ENCODE measurements at regions of chr7 and their contacts with region 1.

Region 1: DNA sequence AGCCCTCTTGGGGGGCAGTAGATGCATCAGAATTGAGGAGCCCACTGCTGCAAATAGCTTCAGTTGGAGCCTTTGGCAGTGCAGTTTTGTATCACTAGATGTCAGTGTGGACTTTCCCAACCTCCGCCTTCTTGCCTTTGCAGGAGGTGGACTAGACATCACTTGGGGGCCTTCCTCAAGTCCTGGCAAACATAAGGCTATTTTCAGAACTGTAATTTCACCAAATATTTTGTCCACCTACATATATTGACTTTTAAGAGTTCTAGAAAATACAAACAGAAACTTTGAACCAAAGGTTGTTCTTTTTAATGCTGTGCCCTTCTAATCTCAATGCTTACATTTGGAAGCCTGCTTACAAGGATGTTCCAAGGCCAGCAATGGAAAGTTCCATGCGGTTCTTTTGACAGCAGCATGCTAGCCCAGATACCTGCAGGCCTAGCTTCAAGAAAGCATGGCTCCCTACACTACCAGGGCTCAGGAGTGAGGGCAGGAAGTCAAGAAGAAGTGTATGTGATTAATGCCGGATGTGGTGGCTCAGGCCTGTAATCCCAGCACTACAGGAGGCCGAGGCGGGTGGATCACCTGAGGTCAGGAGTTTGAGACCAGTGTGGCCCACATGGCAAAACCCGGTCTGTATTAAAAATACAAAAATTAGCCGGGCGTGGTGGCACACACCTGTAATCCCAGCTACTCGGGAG is 8.0 kb upstream of the ZNRF2 start:
- DNase-seq: no peak
- ATAC-seq: peak; percentile 78
- H3K4me3 Mint-ChIP-seq: no peak overlapping the region
- H3K27ac Mint-ChIP-seq: no peak overlapping the region
- H3K4me1 Mint-ChIP-seq: peaks cover 16% of the 10 kb centered on the region
- H3K27me3 Mint-ChIP-seq: no peaks in the 10 kb centered on the region
- CTCF ChIP-seq: no peak

Region 2: GRCh38 chr7:29878081-29878688 is 398.2 kb before region 1 on chr7:
- CTCF ChIA-PET with region 1: no interaction called
- POLR2A ChIA-PET with region 1: no interaction called
- intact Hi-C with region 1: loop called (anchors 10 kb)
- DNase-seq: no peak
- ATAC-seq: peak; percentile 31
- H3K4me3 Mint-ChIP-seq: no peak overlapping the region
- H3K27ac Mint-ChIP-seq: no peak overlapping the region
- H3K4me1 Mint-ChIP-seq: peaks cover 3% of the 10 kb centered on the region
- H3K27me3 Mint-ChIP-seq: peaks cover 12% of the 10 kb centered on the region
- CTCF ChIP-seq: peak; percentile 37

Region 3: GRCh38 chr7:30238721-30239441 is 37.5 kb before region 1 on chr7:
- CTCF ChIA-PET with region 1: interaction called, 10 read pairs
- POLR2A ChIA-PET with region 1: no interaction called
- intact Hi-C with region 1: no loop called
- DNase-seq: no peak
- ATAC-seq: peak; percentile 69
- H3K4me3 Mint-ChIP-seq: peak overlapping the region; percentile 58
- H3K27ac Mint-ChIP-seq: peak overlapping the region; percentile 88
- H3K4me1 Mint-ChIP-seq: peaks cover 48% of the 10 kb centered on the region
- H3K27me3 Mint-ChIP-seq: no peaks in the 10 kb centered on the region
- CTCF ChIP-seq: no peak

Region 4: DNA sequence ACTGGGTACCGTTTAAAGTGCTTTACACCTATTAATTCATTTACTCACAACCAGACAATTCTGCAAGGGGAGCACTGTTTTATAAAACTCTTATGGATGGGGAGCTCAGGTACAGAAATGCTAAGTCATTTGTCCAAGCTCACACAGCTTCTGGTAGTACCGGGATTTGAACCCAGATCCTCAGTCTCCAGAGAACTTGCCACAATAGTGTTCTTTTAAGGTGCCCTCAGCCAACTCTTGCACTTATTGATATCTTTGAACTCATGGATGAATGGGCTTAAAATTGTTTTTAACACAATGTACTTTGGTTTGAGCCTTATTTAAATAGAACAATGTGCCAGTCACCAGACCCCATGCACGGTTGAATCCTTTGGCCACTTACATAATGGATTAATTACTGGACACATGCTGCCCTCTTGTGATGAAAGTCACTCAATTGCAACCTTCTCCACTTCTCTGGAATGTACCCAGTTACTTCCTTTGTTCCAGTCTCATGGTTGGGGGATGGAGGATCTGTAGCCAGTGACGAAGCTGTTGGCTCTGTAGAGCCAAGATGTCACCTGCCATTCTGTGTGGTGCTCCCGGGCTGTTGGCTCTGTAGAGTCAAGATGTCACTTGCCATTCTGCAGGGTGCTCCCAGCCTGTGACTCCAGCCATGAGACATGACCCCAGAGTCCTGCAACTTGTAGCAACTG is 136.6 kb after region 1 on chr7:
- CTCF ChIA-PET with region 1: interaction called, 14 read pairs
- POLR2A ChIA-PET with region 1: no interaction called
- intact Hi-C with region 1: loop called (anchors 1 kb)
- DNase-seq: no peak
- ATAC-seq: peak; percentile 57
- H3K4me3 Mint-ChIP-seq: no peak overlapping the region
- H3K27ac Mint-ChIP-seq: no peak overlapping the region
- H3K4me1 Mint-ChIP-seq: peaks cover 33% of the 10 kb centered on the region
- H3K27me3 Mint-ChIP-seq: no peaks in the 10 kb centered on the region
- CTCF ChIP-seq: no peak

Region 5: DNA sequence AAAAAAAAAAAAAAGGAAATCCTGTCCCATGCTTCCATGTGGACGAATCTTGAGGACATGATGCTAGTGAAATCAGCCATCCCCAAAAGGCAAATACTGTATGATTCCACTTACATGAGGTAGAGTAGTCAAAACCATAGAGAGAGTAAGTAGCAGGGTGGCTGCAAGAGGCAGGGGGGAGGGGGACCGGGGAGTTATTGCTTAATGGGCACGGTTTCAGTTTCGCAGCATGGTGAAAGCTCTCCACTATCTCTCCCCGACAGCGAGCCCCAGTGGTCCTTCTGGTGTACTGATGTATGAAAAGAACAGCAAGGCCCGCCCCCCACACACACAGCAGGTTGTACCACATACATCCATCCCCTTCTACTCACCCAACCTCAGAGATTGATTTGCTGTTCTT is 169.4 kb after region 1 on chr7:
- CTCF ChIA-PET with region 1: interaction called, 6 read pairs
- POLR2A ChIA-PET with region 1: no interaction called
- intact Hi-C with region 1: loop called (anchors 5 kb)
- DNase-seq: peak; percentile 66
- ATAC-seq: peak; percentile 100
- H3K4me3 Mint-ChIP-seq: no peak overlapping the region
- H3K27ac Mint-ChIP-seq: peak overlapping the region; percentile 64
- H3K4me1 Mint-ChIP-seq: peaks cover 6% of the 10 kb centered on the region
- H3K27me3 Mint-ChIP-seq: no peaks in the 10 kb centered on the region
- CTCF ChIP-seq: no peak

Region 6: DNA sequence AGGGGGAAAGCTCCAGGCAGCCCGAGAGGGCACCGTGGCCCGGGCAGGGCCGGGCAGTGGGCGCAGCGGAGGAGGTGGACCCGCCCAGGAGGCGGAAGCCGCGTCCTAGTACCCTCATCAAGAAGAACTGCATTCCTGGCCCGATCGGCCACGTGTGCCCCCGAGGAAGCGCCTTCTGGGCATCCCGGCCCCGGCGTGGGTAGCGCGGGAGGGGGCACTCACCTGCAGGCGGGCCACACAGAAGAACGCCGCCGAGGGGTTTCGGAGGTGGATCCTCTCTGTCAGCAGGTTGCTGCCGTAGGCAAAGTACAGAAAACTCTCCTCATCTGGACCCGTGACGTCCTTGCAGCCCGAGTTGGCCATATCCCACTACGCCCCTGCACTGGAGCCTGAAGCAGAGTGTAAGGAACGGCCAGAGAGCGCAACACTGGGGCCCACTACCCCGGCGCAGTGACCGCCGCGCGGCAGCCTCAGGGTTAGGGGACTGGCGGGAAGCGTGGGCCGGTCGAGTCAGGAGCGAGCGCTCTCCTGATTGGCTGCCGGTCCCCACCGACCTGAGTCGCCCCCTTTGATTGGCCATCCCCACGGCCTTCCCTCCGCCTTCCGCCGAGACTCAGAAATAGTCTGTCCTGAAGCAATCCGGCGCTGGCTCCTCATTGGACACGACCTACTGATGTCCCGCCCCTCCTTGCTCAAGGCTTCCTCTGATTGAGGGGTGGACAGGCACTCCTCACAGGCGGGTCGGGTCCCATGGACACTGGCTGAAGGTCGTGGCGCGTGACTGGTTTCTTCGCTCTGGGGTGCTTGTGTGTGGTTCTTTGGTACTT is 228.2 kb after region 1 on chr7 and contains the start of gene GGCT:
- CTCF ChIA-PET with region 1: interaction called, 7 read pairs
- POLR2A ChIA-PET with region 1: interaction called, 3 read pairs
- intact Hi-C with region 1: loop called (anchors 2 kb)
- DNase-seq: peak; percentile 87
- ATAC-seq: peak; percentile 98
- H3K4me3 Mint-ChIP-seq: peak within 1 kb of the TSS; percentile 91
- H3K27ac Mint-ChIP-seq: peak within 1 kb of the TSS; percentile 97
- H3K4me1 Mint-ChIP-seq: peaks cover 39% of the 10 kb centered on the region
- H3K27me3 Mint-ChIP-seq: no peaks in the 10 kb centered on the region
- CTCF ChIP-seq: no peak
- total RNA-seq, gene GGCT: 22.7 and 24.4 TPM in 2 replicates

Region 7: DNA sequence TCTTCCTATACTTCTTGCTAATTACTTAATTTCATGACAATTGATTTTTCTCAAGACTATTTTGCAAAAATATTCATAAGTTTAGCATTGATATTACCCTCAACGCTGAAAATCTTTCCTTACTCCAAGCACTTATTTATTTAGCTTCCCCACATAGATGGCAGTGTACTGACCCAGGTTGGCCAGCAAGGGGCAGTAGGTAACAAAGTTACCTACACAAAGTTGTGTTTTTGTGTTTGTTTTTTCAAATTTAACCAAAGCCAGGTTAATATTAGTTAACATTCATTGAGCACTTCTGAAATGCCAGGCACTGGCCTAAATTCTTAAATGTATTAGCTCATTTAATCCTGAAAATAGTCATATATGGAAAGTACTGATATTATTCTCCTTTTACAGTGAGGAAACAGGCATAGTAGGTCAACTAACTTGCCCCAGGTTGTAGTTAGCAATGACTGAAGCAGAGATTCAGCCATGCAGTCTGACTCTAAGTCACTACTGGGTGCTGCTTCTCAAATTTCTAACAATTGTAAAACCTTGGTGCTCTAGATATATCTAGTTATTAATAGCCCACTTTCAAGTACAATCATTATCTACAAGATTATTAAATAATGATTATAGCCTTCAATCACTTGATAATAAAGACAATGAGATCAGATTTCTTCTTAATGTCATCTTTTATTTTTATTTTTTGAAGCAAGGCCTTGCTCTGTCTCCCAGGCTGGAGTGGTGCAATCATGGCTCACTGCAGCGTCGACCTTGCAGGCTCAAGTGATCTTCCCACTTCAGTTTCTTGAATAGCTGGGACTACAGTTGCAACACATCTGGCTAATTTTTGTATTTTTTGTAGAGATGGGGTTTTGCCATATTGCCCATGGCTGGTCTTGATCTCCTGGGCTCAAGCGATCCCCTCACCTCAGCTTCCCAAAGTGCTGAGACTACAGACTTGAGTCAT is 234.0 kb after region 1 on chr7:
- CTCF ChIA-PET with region 1: interaction called, 7 read pairs
- POLR2A ChIA-PET with region 1: interaction called, 3 read pairs
- intact Hi-C with region 1: loop called (anchors 1 kb)
- DNase-seq: no peak
- ATAC-seq: peak; percentile 72
- H3K4me3 Mint-ChIP-seq: no peak overlapping the region
- H3K27ac Mint-ChIP-seq: no peak overlapping the region
- H3K4me1 Mint-ChIP-seq: peaks cover 5% of the 10 kb centered on the region
- H3K27me3 Mint-ChIP-seq: no peaks in the 10 kb centered on the region
- CTCF ChIP-seq: peak; percentile 42